PC-3 (cell line): ENCODE measurements at regions of chr12 and their contacts with region 1.

Region 1: GRCh38 chr12:68610370-68611093 is at the start of gene RAP1B:
- DNase-seq: peak; percentile 92
- ATAC-seq: peak; percentile 86
- H3K4me3 ChIP-seq: peak within 1 kb of the TSS; percentile 91
- H3K27ac ChIP-seq: peak within 1 kb of the TSS; percentile 57
- H3K4me1 ChIP-seq: peaks cover 38% of the 10 kb centered on the region
- H3K27me3 ChIP-seq: no peaks in the 10 kb centered on the region
- CTCF ChIP-seq: no peak
- total RNA-seq, gene RAP1B: 98.0 and 103 TPM in 2 replicates

Region 2: GRCh38 chr12:68331869-68332727 is 278.4 kb before region 1 on chr12 and contains the start of gene MDM1:
- CTCF ChIA-PET with region 1: no interaction called
- POLR2A ChIA-PET with region 1: no interaction called
- intact Hi-C with region 1: loop called (anchors 2 kb)
- DNase-seq: peak; percentile 99
- ATAC-seq: peak; percentile 95
- H3K4me3 ChIP-seq: peak within 1 kb of the TSS; percentile 83
- H3K27ac ChIP-seq: no peak within 1 kb of the TSS
- H3K4me1 ChIP-seq: peaks cover 22% of the 10 kb centered on the region
- H3K27me3 ChIP-seq: no peaks in the 10 kb centered on the region
- CTCF ChIP-seq: no peak
- total RNA-seq, gene MDM1: 10.4 and 19.2 TPM in 2 replicates

Region 3: GRCh38 chr12:68495336-68496070 is 115.0 kb before region 1 on chr12:
- CTCF ChIA-PET with region 1: interaction called, 10 read pairs
- POLR2A ChIA-PET with region 1: no interaction called
- intact Hi-C with region 1: no loop called
- DNase-seq: no peak
- ATAC-seq: no peak
- H3K4me3 ChIP-seq: no peak overlapping the region
- H3K27ac ChIP-seq: no peak overlapping the region
- H3K4me1 ChIP-seq: no peaks in the 10 kb centered on the region
- H3K27me3 ChIP-seq: no peaks in the 10 kb centered on the region
- CTCF ChIP-seq: no peak

Region 4: GRCh38 chr12:68587448-68587873 is 23.1 kb before region 1 on chr12:
- CTCF ChIA-PET with region 1: no interaction called
- POLR2A ChIA-PET with region 1: interaction called, 13 read pairs
- intact Hi-C with region 1: loop called (anchors 1 kb)
- DNase-seq: no peak
- ATAC-seq: no peak
- H3K4me3 ChIP-seq: no peak overlapping the region
- H3K27ac ChIP-seq: no peak overlapping the region
- H3K4me1 ChIP-seq: peaks cover 18% of the 10 kb centered on the region
- H3K27me3 ChIP-seq: no peaks in the 10 kb centered on the region
- CTCF ChIP-seq: no peak

Region 5: DNA sequence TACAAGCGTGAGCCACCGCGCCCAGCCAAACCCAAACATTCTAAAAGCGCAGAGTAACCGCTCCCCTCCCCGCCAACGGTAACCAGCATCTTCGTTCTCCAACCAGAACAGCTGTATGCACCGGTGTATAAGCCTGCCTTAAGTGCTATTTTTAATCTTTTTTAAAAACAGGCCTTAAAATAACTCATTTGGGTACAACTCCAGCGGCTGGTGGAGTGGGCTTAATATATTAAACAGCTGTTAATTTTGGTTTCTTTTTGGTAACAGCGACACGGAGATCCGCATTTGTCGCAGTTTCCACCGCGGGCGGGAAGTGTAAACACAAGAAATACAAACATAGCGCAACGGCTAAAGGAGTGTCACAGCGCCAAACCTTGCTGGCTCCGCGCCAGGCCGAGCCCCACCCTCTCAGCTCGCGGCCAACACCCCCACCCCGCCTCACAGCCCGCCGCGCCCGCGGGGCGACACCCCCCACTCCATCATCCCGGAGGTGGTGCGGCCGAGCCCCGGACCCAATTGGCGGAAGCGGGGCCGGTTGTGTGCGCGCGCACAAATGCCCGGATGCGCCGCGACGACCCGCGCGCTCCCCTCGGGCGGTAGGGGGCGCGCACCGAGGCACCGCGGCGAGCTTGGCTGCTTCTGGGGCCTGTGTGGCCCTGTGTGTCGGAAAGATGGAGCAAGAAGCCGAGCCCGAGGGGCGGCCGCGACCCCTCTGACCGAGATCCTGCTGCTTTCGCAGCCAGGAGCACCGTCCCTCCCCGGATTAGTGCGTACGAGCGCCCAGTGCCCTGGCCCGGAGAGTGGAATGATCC is 197.2 kb after region 1 on chr12 and contains the start of gene MDM2:
- CTCF ChIA-PET with region 1: no interaction called
- POLR2A ChIA-PET with region 1: no interaction called
- intact Hi-C with region 1: loop called (anchors 5 kb)
- DNase-seq: peak; percentile 93
- ATAC-seq: peak; percentile 82
- H3K4me3 ChIP-seq: peak within 1 kb of the TSS; percentile 81
- H3K27ac ChIP-seq: peak within 1 kb of the TSS; percentile 95
- H3K4me1 ChIP-seq: peaks cover 15% of the 10 kb centered on the region
- H3K27me3 ChIP-seq: no peaks in the 10 kb centered on the region
- CTCF ChIP-seq: peak; percentile 64; the same call in 1 of the 2 replicates
- total RNA-seq, gene MDM2: 43.0 and 86.4 TPM in 2 replicates